Natural killer cell (primary cell): ENCODE measurements at regions of chr17 and their contacts with region 1.

Region 1: GRCh38 chr17:67406912-67407311 is 29.8 kb downstream of the PITPNC1 start:
- DNase-seq: no peak
- ATAC-seq: no peak
- H3K4me3 ChIP-seq: no peak overlapping the region
- H3K4me3 Mint-ChIP-seq: peak overlapping the region; percentile 65
- H3K27ac ChIP-seq: peak overlapping the region; percentile 83
- H3K27ac Mint-ChIP-seq: peak overlapping the region; percentile 93 to 95
- H3K4me1 ChIP-seq: peaks cover 51% of the 10 kb centered on the region
- H3K4me1 Mint-ChIP-seq: peaks cover 69 to 74% of the 10 kb centered on the region in 2 donors
- H3K27me3 ChIP-seq: no peaks in the 10 kb centered on the region
- H3K27me3 Mint-ChIP-seq: no peaks in the 10 kb centered on the region
- CTCF ChIP-seq: no peak

Region 2: GRCh38 chr17:67475236-67475937 is 68.5 kb after region 1 on chr17:
- intact Hi-C with region 1: loop called (anchors 1 kb)
- DNase-seq: peak; percentile 79 to 95
- ATAC-seq: peak; percentile 78 to 95 (median 85)
- H3K4me3 ChIP-seq: no peak overlapping the region
- H3K4me3 Mint-ChIP-seq: peak overlapping the region; percentile 65
- H3K27ac ChIP-seq: peak overlapping the region; percentile 83
- H3K27ac Mint-ChIP-seq: peak overlapping the region; percentile 89 to 94
- H3K4me1 ChIP-seq: peaks cover 66% of the 10 kb centered on the region
- H3K4me1 Mint-ChIP-seq: peaks cover 61 to 62% of the 10 kb centered on the region in 2 donors
- H3K27me3 ChIP-seq: no peaks in the 10 kb centered on the region
- H3K27me3 Mint-ChIP-seq: no peaks in the 10 kb centered on the region
- CTCF ChIP-seq: peak; percentile 91